Activated naive CD4-positive, alpha-beta T cell treated with anti-CD3 and anti-CD28 coated beads for 36 hours (primary cell): ENCODE measurements at regions of chr11 and their contacts with region 1.

Region 1: GRCh38 chr11:78188286-78189173 is at the starts of genes KCTD21 and USP35:
- DNase-seq: peak; percentile 93
- H3K4me3 Mint-ChIP-seq: peak within 1 kb of the TSS; percentile 99
- H3K27ac Mint-ChIP-seq: peak within 1 kb of the TSS; percentile 99
- H3K4me1 Mint-ChIP-seq: peaks cover 55% of the 10 kb centered on the region
- H3K27me3 Mint-ChIP-seq: no peaks in the 10 kb centered on the region
- total RNA-seq, gene KCTD21: 8.6 to 10.1 TPM
- total RNA-seq, gene USP35: 13.4 to 14.2 TPM

Region 2: GRCh38 chr11:77637345-77638165 is 551.0 kb before region 1 on chr11 and contains the start of gene CLNS1A:
- CTCF ChIA-PET with region 1: no interaction called
- intact Hi-C with region 1: loop called (anchors 5 kb)
- DNase-seq: peak; percentile 90
- H3K4me3 Mint-ChIP-seq: peak within 1 kb of the TSS; percentile 89
- H3K27ac Mint-ChIP-seq: peak within 1 kb of the TSS; percentile 92
- H3K4me1 Mint-ChIP-seq: peaks cover 35% of the 10 kb centered on the region
- H3K27me3 Mint-ChIP-seq: no peaks in the 10 kb centered on the region
- total RNA-seq, gene CLNS1A: 190 to 191 TPM

Region 3: DNA sequence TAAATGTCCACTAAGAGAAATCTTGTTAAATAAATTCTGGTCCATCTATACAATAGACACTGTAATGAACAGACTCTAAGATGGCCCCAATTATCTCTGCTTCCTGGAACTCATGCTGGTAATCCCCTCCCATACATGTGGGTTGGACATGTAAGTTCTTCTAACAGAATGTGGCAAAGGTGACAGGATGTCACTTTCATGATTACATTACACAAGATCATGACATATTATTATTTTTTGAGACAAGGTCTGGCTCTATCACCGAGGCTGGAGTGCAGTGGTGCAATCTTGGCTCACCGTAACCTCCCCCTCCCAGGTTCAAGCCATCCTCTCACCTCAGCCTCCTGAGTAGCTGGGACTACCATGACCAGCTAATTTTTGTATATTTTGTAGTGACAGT is 94.3 kb before region 1 on chr11:
- CTCF ChIA-PET with region 1: no interaction called
- intact Hi-C with region 1: loop called (anchors 5 kb)
- DNase-seq: peak; percentile 54
- H3K4me3 Mint-ChIP-seq: no peak overlapping the region
- H3K27ac Mint-ChIP-seq: peak overlapping the region; percentile 73
- H3K4me1 Mint-ChIP-seq: peaks cover 13% of the 10 kb centered on the region
- H3K27me3 Mint-ChIP-seq: no peaks in the 10 kb centered on the region

Region 4: DNA sequence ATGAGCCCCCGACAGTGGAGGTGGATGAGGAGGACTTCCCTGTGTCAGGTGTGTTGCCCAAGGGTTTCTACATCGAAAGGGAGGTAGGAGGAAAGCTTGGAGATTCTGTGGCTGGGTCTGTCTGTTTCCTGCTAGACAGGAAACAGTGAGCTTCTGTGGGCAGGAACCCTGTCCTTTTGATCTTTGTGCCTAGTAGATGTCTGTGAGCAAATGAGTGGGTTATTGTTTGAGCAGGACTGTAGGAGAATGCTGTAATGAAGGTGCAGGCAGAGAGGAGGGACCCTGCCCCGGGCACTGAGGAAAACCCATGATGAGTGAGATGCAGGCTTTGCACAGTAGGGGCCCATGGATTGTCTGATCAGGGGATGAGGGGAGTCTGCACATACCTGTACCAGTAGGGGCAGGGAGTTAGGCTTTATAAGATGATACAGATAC is 14.2 kb after region 1 on chr11:
- CTCF ChIA-PET with region 1: interaction called, 6 read pairs
- intact Hi-C with region 1: loop called (anchors 1 kb)
- DNase-seq: peak; percentile 73
- H3K4me3 Mint-ChIP-seq: peak overlapping the region; percentile 59
- H3K27ac Mint-ChIP-seq: peak overlapping the region; percentile 95
- H3K4me1 Mint-ChIP-seq: peaks cover 43% of the 10 kb centered on the region
- H3K27me3 Mint-ChIP-seq: no peaks in the 10 kb centered on the region

Region 5: GRCh38 chr11:78228467-78228866 is 39.9 kb after region 1 on chr11:
- CTCF ChIA-PET with region 1: no interaction called
- intact Hi-C with region 1: loop called (anchors 1 kb)
- DNase-seq: peak; percentile 28
- H3K4me3 Mint-ChIP-seq: no peak overlapping the region
- H3K27ac Mint-ChIP-seq: no peak overlapping the region
- H3K4me1 Mint-ChIP-seq: peaks cover 18% of the 10 kb centered on the region
- H3K27me3 Mint-ChIP-seq: no peaks in the 10 kb centered on the region

Region 6: DNA sequence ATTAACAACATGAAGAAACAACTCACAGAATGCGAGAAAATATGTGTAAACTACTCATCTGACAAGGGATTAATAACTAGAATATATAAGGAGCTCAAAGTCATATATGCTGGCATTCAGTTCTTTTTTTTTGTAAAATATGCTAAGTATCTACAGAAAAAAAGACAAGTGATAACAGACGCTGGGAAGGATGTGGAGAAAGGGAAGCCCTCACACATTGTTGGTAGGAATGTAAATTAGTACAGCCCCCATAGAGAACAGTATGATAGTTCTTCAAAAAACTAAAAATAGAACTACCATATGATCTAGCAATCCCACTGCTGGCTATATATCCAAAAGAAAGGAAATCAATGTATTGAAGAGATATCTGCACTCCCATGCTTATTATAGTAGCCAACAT is 215.3 kb after region 1 on chr11:
- CTCF ChIA-PET with region 1: no interaction called
- intact Hi-C with region 1: no loop called
- DNase-seq: no peak
- H3K4me3 Mint-ChIP-seq: no peak overlapping the region
- H3K27ac Mint-ChIP-seq: no peak overlapping the region
- H3K4me1 Mint-ChIP-seq: no peaks in the 10 kb centered on the region
- H3K27me3 Mint-ChIP-seq: no peaks in the 10 kb centered on the region

Region 7: GRCh38 chr11:78416305-78417178 is 228.0 kb after region 1 on chr11:
- CTCF ChIA-PET with region 1: interaction called, 3 read pairs
- intact Hi-C with region 1: loop called (anchors 1 kb)
- DNase-seq: peak; percentile 88
- H3K4me3 Mint-ChIP-seq: peak overlapping the region; percentile 81
- H3K27ac Mint-ChIP-seq: peak overlapping the region; percentile 44
- H3K4me1 Mint-ChIP-seq: peaks cover 22% of the 10 kb centered on the region
- H3K27me3 Mint-ChIP-seq: peaks cover 33% of the 10 kb centered on the region